ENCODE measurements at regions of chr15 and their contacts with region 1.

Region 1: DNA sequence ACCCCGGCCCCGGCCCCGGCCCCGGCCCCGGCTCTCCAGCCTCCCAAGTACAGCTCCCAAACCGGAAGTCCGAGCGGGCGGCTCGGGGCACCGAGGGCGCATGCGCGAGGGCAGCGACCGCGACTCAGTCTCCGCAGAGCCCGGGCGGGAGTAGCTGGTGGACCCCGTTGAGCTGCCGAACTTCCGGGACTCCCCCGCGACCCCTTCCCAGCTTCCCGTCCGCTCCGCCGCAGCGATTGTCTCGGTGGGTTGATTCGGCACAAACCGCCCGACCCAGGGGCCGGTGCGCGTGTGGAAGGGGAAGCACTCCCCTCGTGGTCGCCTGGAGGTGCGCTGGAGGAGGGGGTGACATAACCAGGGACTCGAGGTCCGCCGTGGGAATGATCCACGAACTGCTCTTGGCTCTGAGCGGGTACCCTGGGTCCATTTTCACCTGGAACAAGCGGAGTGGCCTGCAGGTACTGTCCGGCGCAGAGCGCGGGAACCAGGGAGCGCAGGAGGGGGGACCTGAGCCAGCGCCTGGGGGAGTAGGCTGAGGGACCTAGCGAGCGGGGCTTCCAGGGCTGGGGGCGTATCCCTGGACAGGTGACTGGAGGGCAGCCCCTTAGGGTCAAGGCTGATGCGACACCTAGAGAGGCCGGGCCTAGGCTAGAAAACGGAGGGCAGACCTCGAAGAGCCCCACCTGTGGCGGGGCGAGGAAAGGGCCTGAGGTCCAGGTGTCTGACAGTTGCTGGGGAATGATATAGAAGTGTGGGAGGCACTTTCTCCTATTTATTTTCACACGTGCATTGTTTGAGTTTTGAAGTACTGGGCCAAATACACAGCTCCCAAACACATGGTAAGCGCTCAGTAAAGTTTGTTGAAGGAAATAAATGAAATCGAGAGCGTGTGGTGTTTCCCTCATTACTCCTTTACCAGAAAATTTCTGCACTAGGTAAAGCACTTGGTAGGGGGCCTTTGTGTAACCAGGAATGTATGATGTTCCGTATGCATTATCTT is at the starts of genes TUBGCP4 and ZSCAN29:
- H3K4me3 Mint-ChIP-seq: peak within 1 kb of the TSS; percentile 94
- H3K27ac Mint-ChIP-seq: peak within 1 kb of the TSS; percentile 88
- H3K4me1 Mint-ChIP-seq: peaks cover 52% of the 10 kb centered on the region
- H3K27me3 Mint-ChIP-seq: no peaks in the 10 kb centered on the region

Region 2: DNA sequence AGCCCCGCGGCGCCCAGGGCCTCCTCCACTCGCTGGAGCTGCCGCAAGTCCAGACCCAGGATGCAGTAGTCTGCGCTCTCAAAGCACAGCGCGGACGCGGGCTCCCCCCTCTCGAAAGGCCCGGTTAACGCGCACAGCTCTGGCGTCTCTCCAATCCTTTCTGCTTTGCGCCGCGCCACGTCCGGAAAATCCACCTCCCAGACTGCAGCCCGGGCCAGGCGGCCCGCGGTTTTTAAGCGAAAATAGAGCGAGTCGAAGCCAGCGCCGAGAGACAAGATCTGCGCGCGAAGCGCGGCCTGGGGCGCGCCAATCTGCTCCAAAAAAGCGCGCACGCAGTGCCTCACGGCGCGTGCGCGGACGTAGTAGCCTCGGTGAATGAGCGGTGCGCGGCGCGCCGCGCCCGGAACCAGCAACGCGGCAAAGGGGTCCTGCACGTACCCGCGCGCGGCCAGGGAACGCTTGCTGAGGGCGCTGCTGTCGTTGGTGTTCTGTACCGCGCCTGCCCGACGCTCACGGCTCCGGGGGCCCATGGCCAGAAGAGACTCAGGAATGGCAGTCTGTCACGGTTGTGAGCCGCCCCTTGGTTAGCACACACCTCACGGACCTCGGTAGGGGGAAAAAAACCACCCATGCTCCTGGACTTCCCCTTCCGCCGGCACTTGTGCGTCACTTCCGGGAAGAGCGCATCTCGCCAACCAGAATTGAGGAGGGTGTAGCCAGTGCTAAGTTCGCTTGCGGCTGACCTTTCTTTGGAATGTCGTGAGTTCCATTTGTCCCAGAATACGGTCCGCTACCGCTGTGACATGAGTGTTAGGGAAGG is 41.1 kb before region 1 on chr15 and contains the start of gene LCMT2:
- intact Hi-C with region 1: loop called (anchors 5 kb)
- H3K4me3 Mint-ChIP-seq: peak within 1 kb of the TSS; percentile 87
- H3K27ac Mint-ChIP-seq: peak within 1 kb of the TSS; percentile 90
- H3K4me1 Mint-ChIP-seq: peaks cover 10% of the 10 kb centered on the region
- H3K27me3 Mint-ChIP-seq: peaks cover 3% of the 10 kb centered on the region

Measured in dendritic cell treated with granulocyte-macrophage colony-stimulating factor and Interleukin-4, amounts not matched to agents 40 ng/mL and 50 ng/mL, for 4 days (primary cell).